H1 (cell line): ENCODE measurements at regions of chr16 and their contacts with region 1.

Region 1: DNA sequence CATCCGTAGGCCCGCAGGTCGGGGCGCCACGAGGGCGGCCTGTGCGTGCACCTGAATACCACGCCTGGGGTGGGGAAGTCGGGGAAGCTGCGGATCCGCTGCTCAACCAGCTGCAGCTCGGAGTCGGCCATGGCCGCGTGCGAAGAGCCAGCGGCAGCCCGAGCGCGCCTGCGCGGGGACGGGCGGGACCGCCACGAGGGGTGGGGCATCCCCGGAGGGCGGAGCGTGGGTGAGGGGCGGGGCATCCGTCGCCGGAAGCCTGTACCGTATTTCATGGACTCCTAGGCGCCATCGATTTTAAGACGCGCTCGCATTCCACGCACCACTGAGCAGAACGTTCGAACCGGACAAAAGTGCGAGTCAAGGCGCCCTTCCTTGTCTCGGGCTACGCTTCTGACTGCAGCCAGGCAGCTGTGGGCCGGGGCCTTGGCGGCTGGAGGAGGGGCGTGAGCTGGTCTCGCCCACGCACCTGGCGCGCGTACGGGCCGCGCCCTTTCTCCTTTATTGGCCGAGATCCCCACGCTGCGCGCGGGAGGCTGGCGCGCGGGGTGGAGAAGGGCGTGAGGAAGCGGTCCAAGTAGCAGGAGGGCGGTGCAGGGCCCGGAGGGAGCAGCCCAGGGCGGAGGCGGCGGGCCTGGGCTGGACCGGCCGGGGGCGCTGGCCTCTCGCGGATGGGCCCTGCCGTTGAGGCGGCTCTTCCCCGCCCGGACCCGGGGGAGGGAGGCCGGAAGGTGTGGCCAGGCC is at the start of gene APRT:
- DNase-seq: peak; percentile 79 to 99
- H3K4me3 ChIP-seq: peak within 1 kb of the TSS; percentile 67 to 86 (median 82)
- H3K27ac ChIP-seq: peak within 1 kb of the TSS; percentile 85
- H3K4me1 ChIP-seq: peaks cover 0 to 11% (median 4%) of the 10 kb centered on the region in 4 experiments; a peak in 5 of 7 replicates
- H3K27me3 ChIP-seq: no peaks in the 10 kb centered on the region
- CTCF ChIP-seq: peak in 2 of 3 experiments; percentile 38 to 47; a peak in 2 of 4 replicates
- EP300 ChIP-seq: no peak
- POLR2A ChIP-seq: peak in 1 of 2 experiments; percentile 81; a peak in 2 of 3 replicates
- RAD21 ChIP-seq: peak; percentile 55 to 68
- total RNA-seq, gene APRT: 221 and 244 TPM in 2 replicates

Region 2: GRCh38 chr16:88737298-88738150 is 74.4 kb before region 1 on chr16:
- CTCF ChIA-PET with region 1: interaction called, 6 read pairs
- POLR2A ChIA-PET with region 1: interaction called, 14 read pairs
- DNase-seq: peak; percentile 29 to 88
- H3K4me3 ChIP-seq: no peak overlapping the region
- H3K27ac ChIP-seq: no peak overlapping the region
- H3K4me1 ChIP-seq: peaks cover 0 to 5% (median 0%) of the 10 kb centered on the region in 4 experiments; a peak in 1 of 7 replicates
- H3K27me3 ChIP-seq: no peaks in the 10 kb centered on the region
- CTCF ChIP-seq: peak; percentile 86 to 99 (median 91)
- EP300 ChIP-seq: no peak
- POLR2A ChIP-seq: no peak
- RAD21 ChIP-seq: peak; percentile 40 to 66; a peak in 3 of 4 replicates

Region 3: GRCh38 chr16:88763502-88764053 is 48.4 kb before region 1 on chr16:
- CTCF ChIA-PET with region 1: interaction called, 7 read pairs
- POLR2A ChIA-PET with region 1: interaction called, 14 read pairs
- DNase-seq: peak in 1 of 2 experiments; percentile 85
- H3K4me3 ChIP-seq: peak overlapping the region in 1 of 4 experiments; percentile 3; a peak in 1 of 8 replicates
- H3K27ac ChIP-seq: peak overlapping the region; percentile 64
- H3K4me1 ChIP-seq: peaks cover 4 to 43% (median 34%) of the 10 kb centered on the region in 4 experiments
- H3K27me3 ChIP-seq: no peaks in the 10 kb centered on the region
- CTCF ChIP-seq: peak in 1 of 3 experiments; percentile 40; a peak in 1 of 4 replicates
- EP300 ChIP-seq: no peak
- POLR2A ChIP-seq: no peak
- RAD21 ChIP-seq: no peak; a peak in 2 of 4 replicates

Region 4: GRCh38 chr16:88799569-88800276 is 12.2 kb before region 1 on chr16:
- CTCF ChIA-PET with region 1: interaction called, 5 read pairs
- POLR2A ChIA-PET with region 1: interaction called, 66 read pairs
- DNase-seq: no peak
- H3K4me3 ChIP-seq: no peak overlapping the region
- H3K27ac ChIP-seq: no peak overlapping the region
- H3K4me1 ChIP-seq: peaks cover 0 to 7% (median 5%) of the 10 kb centered on the region in 4 experiments; a peak in 4 of 7 replicates
- H3K27me3 ChIP-seq: no peaks in the 10 kb centered on the region
- CTCF ChIP-seq: no peak
- EP300 ChIP-seq: no peak
- POLR2A ChIP-seq: no peak
- RAD21 ChIP-seq: no peak

Region 5: GRCh38 chr16:88856828-88857733 is 45.1 kb after region 1 on chr16 and contains the starts of genes GALNS and TRAPPC2L:
- CTCF ChIA-PET with region 1: interaction called, 29 read pairs
- POLR2A ChIA-PET with region 1: interaction called, 25 read pairs
- DNase-seq: peak; percentile 82 to 100
- H3K4me3 ChIP-seq: peak within 1 kb of the TSS; percentile 60 to 96 (median 92)
- H3K27ac ChIP-seq: peak within 1 kb of the TSS; percentile 13; the same call in 1 of the 2 replicates
- H3K4me1 ChIP-seq: peaks cover 0 to 5% (median 3%) of the 10 kb centered on the region in 4 experiments; a peak in 5 of 7 replicates
- H3K27me3 ChIP-seq: no peaks in the 10 kb centered on the region
- CTCF ChIP-seq: no peak
- EP300 ChIP-seq: no peak
- POLR2A ChIP-seq: peak in 1 of 2 experiments; percentile 89; a peak in 2 of 3 replicates
- RAD21 ChIP-seq: no peak
- total RNA-seq, gene GALNS: 17.8 and 22.4 TPM in 2 replicates
- total RNA-seq, gene TRAPPC2L: 94.0 and 98.7 TPM in 2 replicates

Region 6: GRCh38 chr16:88923450-88923849 is 111.5 kb after region 1 on chr16:
- CTCF ChIA-PET with region 1: no interaction called
- POLR2A ChIA-PET with region 1: no interaction called
- DNase-seq: no peak
- H3K4me3 ChIP-seq: no peak overlapping the region
- H3K27ac ChIP-seq: no peak overlapping the region
- H3K4me1 ChIP-seq: peaks cover 0 to 34% (median 16%) of the 10 kb centered on the region in 4 experiments; a peak in 5 of 7 replicates
- H3K27me3 ChIP-seq: no peaks in the 10 kb centered on the region
- CTCF ChIP-seq: no peak
- EP300 ChIP-seq: no peak
- POLR2A ChIP-seq: no peak
- RAD21 ChIP-seq: no peak

Region 7: DNA sequence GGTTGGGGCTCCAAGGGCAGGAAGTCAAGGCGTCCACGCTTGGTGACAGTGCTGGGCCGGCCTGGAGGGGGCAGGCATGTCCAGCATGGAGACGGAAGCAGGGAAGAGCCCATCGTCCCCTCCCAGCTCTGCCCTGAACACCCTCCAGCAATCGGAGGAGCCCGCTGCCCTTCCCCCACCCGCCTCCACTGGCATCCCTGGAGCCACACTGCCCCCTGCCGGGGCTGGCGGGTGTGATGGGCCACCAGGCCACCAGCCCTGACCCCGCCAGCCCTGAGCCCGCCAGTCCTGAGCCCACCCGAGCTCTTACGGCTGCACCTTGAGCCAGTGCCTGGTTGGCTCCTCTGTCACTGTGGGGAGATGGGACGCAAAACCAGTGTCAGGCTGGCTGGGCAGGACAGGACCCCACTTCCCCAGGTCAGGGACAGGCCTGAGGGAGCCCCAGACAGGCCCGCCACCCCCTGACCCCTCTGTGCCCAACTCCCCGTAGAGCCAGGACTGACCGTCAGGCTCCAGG is 355.5 kb after region 1 on chr16:
- CTCF ChIA-PET with region 1: interaction called, 14 read pairs
- POLR2A ChIA-PET with region 1: interaction called, 5 read pairs
- DNase-seq: peak; percentile 81 to 99
- H3K4me3 ChIP-seq: peak overlapping the region in 1 of 4 experiments; percentile 13; a peak in 1 of 8 replicates
- H3K27ac ChIP-seq: peak overlapping the region; percentile 19; the same call in 1 of the 2 replicates
- H3K4me1 ChIP-seq: peaks cover 0 to 19% (median 13%) of the 10 kb centered on the region in 4 experiments; a peak in 6 of 7 replicates
- H3K27me3 ChIP-seq: peaks cover 0 to 6% (median 3%) of the 10 kb centered on the region in 4 experiments; a peak in 3 of 7 replicates
- CTCF ChIP-seq: peak; percentile 64 to 94 (median 93)
- EP300 ChIP-seq: no peak
- POLR2A ChIP-seq: no peak
- RAD21 ChIP-seq: peak; percentile 96